Thyroid gland (tissue), 4 donors: ENCODE measurements at regions of chr18 and their contacts with region 1.

Region 1: GRCh38 chr18:12236934-12237832 is 17.0 kb upstream of the CIDEA start:
- DNase-seq: peak; percentile 68 to 76
- H3K4me3 ChIP-seq: no peak overlapping the region
- H3K27ac ChIP-seq: no peak overlapping the region
- H3K4me1 ChIP-seq: no peaks in the 10 kb centered on the region
- H3K27me3 ChIP-seq: no peaks in the 10 kb centered on the region
- CTCF ChIP-seq: peak; percentile 75 to 93 (median 84)
- POLR2A ChIP-seq: no peak

Region 2: GRCh38 chr18:12092398-12093229 is 144.6 kb before region 1 on chr18:
- intact Hi-C with region 1: loop called (anchors 10 kb)
- DNase-seq: peak; percentile 21 to 55
- H3K4me3 ChIP-seq: no peak overlapping the region
- H3K27ac ChIP-seq: no peak overlapping the region
- H3K4me1 ChIP-seq: no peaks in the 10 kb centered on the region
- H3K27me3 ChIP-seq: no peaks in the 10 kb centered on the region
- CTCF ChIP-seq: peak in 4 of 6 experiments; percentile 3 to 48 (median 32)
- POLR2A ChIP-seq: no peak